Activated CD4-positive, alpha-beta T cell treated with anti-CD3 and anti-CD28 coated beads for 36 hours (primary cell): ENCODE measurements at regions of chr22 and their contacts with region 1.

Region 1: GRCh38 chr22:31585161-31585859 is 76.7 kb downstream of the PISD start:
- DNase-seq: peak; percentile 35
- ATAC-seq: peak; percentile 47
- H3K4me3 Mint-ChIP-seq: no peak overlapping the region
- H3K27ac Mint-ChIP-seq: peak overlapping the region; percentile 64
- H3K4me1 Mint-ChIP-seq: peaks cover 53% of the 10 kb centered on the region
- H3K27me3 Mint-ChIP-seq: no peaks in the 10 kb centered on the region

Region 2: DNA sequence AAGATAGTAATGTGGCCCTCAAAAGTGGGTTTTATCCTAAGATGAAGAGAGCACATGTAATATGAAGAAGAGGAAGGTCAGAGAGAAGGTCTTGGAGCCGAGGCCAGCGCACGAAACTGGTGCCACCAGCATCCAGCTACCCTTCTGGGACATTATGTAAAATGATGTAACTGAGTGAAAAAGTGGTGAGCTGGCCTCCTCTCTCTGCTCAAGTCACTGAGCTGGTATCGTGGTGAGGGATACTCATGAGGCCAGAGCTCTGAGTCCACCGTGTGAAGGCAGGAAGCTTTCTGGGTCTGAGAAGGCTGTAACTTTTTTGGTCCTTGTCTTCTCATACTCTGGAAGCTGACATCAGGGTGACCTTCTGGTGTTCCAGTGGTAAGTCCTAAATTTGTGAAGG is 400.3 kb before region 1 on chr22:
- CTCF ChIA-PET with region 1: no interaction called
- POLR2A ChIA-PET with region 1: no interaction called
- intact Hi-C with region 1: no loop called
- DNase-seq: no peak
- ATAC-seq: no peak
- H3K4me3 Mint-ChIP-seq: no peak overlapping the region
- H3K27ac Mint-ChIP-seq: no peak overlapping the region
- H3K4me1 Mint-ChIP-seq: no peaks in the 10 kb centered on the region
- H3K27me3 Mint-ChIP-seq: no peaks in the 10 kb centered on the region

Region 3: DNA sequence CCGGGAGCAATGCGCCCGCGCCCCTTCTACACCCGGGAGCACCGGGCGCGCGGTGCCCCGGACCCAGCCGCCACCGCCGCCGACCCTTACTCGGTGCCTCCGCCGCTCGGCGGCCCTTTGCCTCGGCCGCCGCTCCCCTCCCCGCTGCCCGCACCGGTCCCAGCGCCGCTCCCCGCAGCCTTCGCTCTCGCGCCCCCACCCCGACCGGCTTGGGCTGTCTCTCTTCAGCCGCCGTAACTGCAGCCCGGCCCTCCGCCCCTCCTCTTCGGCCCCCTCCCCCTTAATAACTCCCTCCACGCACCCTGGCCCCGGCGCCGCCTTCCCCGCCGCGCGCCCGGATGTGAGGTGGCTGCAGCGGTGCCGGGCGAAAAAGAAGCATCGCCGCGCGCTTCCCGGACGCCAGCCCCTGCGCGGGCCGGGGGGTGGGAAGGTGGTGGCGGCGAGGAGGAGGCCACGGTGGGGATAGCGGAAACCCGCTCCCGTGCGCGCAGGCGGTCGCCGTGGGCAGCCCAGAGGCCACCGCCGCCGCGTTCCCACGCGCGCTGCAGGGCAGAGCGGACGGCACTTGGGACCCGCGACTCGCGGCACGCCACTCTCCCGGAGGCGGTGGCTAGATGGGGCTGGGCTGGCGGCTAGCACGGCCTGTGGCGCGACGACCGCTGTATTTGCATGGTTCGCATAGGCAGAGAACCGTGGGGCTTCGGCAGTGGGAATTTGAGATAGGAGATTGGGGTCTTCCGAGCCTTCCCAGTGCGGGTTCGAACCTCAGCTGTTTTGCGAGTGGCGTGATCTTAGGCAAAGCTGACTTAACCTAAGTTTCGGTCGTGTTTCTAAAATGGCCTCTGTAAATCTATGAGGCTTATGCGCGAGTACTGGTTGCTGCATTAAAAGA is 95.5 kb before region 1 on chr22 and contains the start of gene EIF4ENIF1:
- CTCF ChIA-PET with region 1: no interaction called
- POLR2A ChIA-PET with region 1: no interaction called
- intact Hi-C with region 1: loop called in 1 of 2 experiments (anchors 1 kb)
- DNase-seq: peak; percentile 92
- ATAC-seq: peak; percentile 75
- H3K4me3 Mint-ChIP-seq: peak within 1 kb of the TSS; percentile 86
- H3K27ac Mint-ChIP-seq: peak within 1 kb of the TSS; percentile 99
- H3K4me1 Mint-ChIP-seq: peaks cover 46% of the 10 kb centered on the region
- H3K27me3 Mint-ChIP-seq: no peaks in the 10 kb centered on the region
- total RNA-seq, gene EIF4ENIF1: 45.4 to 75.0 TPM

Region 4: DNA sequence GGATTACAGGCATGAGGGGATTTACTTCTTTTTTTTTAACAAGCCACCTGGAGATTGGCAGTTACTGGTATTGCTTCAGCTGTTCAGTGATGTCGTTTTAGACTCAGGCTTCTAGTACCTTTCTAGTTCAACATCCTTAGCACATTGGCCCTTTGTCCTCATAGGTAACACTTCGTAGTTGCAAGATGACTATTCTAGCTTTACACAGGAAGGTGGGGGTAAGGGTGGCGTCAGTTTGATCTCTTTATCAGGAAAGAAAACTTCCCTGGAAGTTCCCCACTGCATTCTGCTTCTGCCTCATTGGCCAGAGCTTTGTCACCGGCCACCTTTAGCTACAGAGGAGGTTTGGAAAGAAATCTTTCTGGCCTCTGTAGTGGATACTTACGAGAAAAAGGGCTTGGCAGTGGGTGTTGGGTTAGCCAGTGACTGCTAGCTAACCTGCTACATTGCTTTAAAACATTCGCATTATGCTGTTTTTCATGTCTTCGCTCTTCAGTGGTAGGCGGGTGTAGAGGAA is 48.2 kb before region 1 on chr22:
- CTCF ChIA-PET with region 1: no interaction called
- POLR2A ChIA-PET with region 1: interaction called, 3 read pairs
- intact Hi-C with region 1: loop called in 1 of 2 experiments (anchors 2 kb)
- DNase-seq: peak; percentile 76
- ATAC-seq: peak; percentile 86
- H3K4me3 Mint-ChIP-seq: peak overlapping the region; percentile 37
- H3K27ac Mint-ChIP-seq: peak overlapping the region; percentile 98
- H3K4me1 Mint-ChIP-seq: peaks cover 78% of the 10 kb centered on the region
- H3K27me3 Mint-ChIP-seq: no peaks in the 10 kb centered on the region

Region 5: GRCh38 chr22:31561238-31561887 is 23.9 kb before region 1 on chr22:
- CTCF ChIA-PET with region 1: interaction called, 8 read pairs
- POLR2A ChIA-PET with region 1: interaction called, 10 read pairs
- intact Hi-C with region 1: no loop called
- DNase-seq: peak; percentile 81
- ATAC-seq: peak; percentile 96
- H3K4me3 Mint-ChIP-seq: no peak overlapping the region
- H3K27ac Mint-ChIP-seq: peak overlapping the region; percentile 43
- H3K4me1 Mint-ChIP-seq: peaks cover 2% of the 10 kb centered on the region
- H3K27me3 Mint-ChIP-seq: no peaks in the 10 kb centered on the region